ENCODE measurements at regions of chr6 and their contacts with region 1.

Region 1: GRCh38 chr6:32576250-32576649 is 13.4 kb downstream of the HLA-DRB1 start:
- DNase-seq: no peak
- H3K4me3 ChIP-seq: no peak overlapping the region
- H3K27ac ChIP-seq: no peak overlapping the region
- H3K4me1 ChIP-seq: no peaks in the 10 kb centered on the region
- H3K27me3 ChIP-seq: no peaks in the 10 kb centered on the region
- CTCF ChIP-seq: no peak
- EP300 ChIP-seq: no peak
- POLR2A ChIP-seq: no peak

Region 2: DNA sequence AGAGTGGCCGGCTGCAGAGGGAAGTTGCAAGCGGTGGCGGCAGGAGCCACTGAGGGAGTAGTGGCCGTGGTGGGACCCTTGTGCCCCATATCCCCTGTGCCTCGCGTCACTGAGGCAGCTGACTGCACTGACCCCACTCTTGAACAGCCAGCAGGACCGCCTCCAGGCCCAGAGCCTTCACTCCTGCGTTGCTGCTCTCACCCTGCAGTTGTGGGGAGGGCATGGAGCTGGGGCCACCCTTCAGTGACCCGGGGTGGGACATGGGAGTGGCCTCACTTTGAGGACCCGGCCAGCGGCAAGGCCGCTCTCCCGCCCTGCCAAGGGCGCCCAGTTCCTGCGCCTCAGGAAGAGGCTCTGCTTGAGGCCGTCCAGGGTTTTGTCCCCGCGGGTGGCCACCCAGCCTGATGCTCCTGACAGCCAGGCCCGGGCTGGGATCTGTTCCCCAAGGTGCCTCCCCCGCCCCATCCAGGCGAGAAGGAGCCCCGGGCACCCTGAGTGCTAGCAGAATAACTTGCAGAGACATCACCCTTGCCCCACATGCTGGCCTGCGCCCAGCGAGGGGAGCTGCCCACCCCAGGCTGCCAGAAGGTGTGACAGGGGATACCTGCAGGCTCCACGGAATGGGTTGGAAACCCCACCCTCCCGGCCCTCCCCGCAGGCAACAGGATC is 92.1 kb before region 1 on chr6:
- in situ Hi-C with region 1: loop called in 1 of 4 experiments (anchors 25 kb)
- intact Hi-C with region 1: loop called (anchors 10 kb)
- DNase-seq: no peak
- H3K4me3 ChIP-seq: no peak overlapping the region
- H3K27ac ChIP-seq: no peak overlapping the region
- H3K4me1 ChIP-seq: no peaks in the 10 kb centered on the region
- H3K27me3 ChIP-seq: no peaks in the 10 kb centered on the region
- CTCF ChIP-seq: no peak
- EP300 ChIP-seq: no peak
- POLR2A ChIP-seq: no peak